Esophagus squamous epithelium (tissue), 5 donors: ENCODE measurements at regions of chr12 and their contacts with region 1.

Region 1: DNA sequence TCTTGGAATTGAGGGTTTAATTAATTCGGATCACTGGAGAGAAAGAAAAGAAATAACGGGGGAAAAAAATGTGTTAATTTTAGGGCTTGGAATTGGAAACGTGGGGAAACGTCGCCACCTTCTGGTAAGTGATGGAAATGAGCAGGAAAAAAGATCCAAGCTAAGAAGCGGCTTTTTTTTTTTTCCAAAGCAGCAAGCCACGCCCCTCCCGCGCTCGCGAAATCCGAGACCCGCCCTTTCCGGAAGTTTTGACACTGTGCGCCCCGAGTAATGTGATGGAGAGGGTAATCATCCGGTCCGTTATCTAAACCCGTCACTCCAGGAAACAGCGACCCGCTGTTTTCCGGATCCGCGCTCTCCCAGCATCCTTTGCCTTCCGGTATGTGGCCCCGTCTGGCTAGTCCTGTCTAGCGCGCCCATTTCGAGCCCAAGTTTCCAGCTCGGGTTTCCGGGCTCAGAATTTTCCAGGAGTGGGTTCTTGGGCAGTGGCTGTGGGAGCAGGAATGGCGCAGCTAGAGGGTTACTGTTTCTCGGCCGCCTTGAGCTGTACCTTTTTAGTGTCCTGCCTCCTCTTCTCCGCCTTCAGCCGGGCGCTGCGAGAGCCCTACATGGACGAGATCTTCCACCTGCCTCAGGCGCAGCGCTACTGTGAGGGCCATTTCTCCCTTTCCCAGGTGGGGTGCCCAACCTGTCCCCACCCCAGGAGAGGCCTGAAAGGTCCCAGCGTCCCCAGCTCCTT is at the start of gene ALG10B:
- DNase-seq: peak; percentile 82
- H3K4me3 ChIP-seq: peak within 1 kb of the TSS; percentile 54 to 83 (median 66)
- H3K27ac ChIP-seq: peak within 1 kb of the TSS; percentile 82 to 91 (median 88)
- H3K4me1 ChIP-seq: peaks cover 0 to 24% (median 0%) of the 10 kb centered on the region in 3 donors
- H3K27me3 ChIP-seq: no peaks in the 10 kb centered on the region
- CTCF ChIP-seq: peak; percentile 45 to 80 (median 56)
- POLR2A ChIP-seq: no peak
- total RNA-seq, gene ALG10B: 2.3 to 4.4 (median 2.6) TPM

Region 2: DNA sequence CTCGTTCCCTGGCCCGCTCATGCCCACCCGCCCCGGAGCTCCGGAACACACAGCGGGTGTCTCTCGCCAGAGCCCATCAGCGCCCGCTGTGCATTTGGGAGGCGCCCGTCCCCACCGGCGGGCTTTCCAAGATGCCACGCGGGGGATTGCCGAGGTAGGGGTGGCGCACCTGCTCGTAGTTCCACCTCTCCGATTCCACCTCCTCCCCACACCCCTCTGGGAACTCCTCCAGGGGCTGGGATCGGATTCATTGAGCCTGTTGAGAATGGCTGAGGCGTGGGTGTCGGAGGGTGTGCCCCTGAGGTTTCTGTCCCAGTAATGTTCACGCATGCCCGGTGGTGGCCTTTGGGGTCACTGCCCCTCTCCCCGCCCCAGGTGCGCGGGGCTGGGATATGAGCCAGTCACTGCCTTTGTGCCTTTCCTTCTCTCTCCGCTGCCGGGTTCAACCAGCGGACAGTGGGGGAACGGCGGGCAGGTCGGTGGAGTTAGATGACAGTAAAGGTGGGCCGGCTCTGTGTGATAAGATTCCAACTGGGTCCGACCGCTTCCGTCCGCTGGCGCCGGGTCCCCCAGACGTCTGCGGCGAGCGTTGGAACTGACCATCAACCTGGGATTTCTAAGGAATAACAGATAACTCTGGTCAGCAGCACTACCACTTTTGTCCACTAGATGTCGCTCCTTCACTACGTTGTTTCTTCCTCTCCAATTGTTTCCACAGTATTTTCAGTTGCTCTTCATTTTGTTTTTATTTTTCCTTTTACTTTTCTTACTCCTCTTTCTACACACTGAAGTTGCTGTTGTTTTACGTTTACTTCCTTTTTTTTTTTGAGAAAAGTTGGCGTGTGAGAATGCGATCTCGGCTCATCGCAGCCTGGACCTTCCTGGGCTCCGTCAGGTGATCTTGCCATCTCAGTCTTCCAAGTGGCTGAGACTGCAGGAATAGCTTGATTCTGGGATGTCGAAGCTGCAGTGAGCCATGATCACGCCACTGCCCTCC is 178.0 kb before region 1 on chr12:
- intact Hi-C with region 1: loop called (anchors 5 kb)
- DNase-seq: no peak
- H3K4me3 ChIP-seq: peak overlapping the region; percentile 25 to 64 (median 42)
- H3K27ac ChIP-seq: no peak overlapping the region
- H3K4me1 ChIP-seq: peaks cover 6 to 13% (median 6%) of the 10 kb centered on the region in 3 donors
- H3K27me3 ChIP-seq: peaks cover 0 to 21% (median 0%) of the 10 kb centered on the region in 4 donors
- CTCF ChIP-seq: peak; percentile 89 to 99 (median 96)
- POLR2A ChIP-seq: no peak